IMR-90 (cell line): ENCODE measurements at regions of chr3 and their contacts with region 1.

Region 1: DNA sequence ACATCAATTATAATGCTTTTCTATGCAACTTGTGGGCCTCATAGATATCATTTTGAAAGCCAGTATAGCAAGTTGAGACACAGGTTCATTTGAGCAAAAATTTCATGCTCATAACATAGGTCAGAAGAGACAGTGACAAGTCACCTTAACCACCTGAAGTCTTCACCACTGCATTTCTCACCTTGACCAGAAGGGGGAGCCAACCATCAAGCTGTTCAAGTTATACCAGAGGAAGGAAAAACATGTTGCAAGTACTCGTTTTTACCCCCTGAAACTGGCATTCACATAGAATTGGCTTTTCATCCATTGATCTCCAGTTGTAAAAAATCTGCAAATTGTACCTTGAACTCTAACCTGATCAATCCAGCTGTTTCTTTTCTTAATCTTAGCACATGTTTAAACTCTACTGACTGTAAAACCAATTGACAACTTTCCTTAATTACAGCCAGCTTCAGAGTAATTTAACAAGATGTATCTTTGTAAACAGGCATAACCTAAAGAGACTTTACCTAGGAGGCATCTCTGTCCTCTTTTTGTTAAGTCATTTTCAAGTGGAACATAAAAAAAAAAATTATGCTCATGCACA is 1.4 kb downstream of the LMOD3 start:
- DNase-seq: peak; percentile 76
- ATAC-seq: peak; percentile 75
- H3K4me3 ChIP-seq: no peak overlapping the region
- H3K27ac ChIP-seq: no peak overlapping the region
- H3K4me1 ChIP-seq: no peaks in the 10 kb centered on the region
- H3K27me3 ChIP-seq: peaks cover 7% of the 10 kb centered on the region
- CTCF ChIP-seq: peak; percentile 78
- POLR2A ChIP-seq: no peak
- RAD21 ChIP-seq: peak; percentile 67

Region 2: DNA sequence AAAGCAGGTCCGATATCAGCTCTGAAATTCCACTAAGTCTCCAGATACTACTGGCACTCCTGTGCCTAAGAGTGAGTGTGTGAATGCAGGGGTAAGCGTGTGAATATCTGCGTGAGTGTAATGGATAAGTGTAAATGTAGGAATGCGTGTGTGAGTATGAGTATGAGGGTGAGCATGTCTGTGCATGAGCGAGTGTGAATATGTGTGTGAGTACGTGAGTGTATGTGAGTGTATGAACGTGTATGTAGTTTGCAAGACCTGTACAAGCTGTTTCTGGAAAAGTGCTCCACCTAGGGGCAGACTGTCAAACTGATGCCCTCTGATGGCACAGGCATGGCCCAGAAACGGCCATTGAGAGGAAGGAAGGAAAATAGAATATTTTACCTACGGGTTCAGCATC is 289.3 kb after region 1 on chr3:
- CTCF ChIA-PET with region 1: interaction called, 3 read pairs
- POLR2A ChIA-PET with region 1: no interaction called
- dilution Hi-C with region 1: no loop called
- in situ Hi-C with region 1: no loop called
- intact Hi-C with region 1: loop called (anchors 2 kb)
- DNase-seq: peak; percentile 53
- ATAC-seq: peak; percentile 93
- H3K4me3 ChIP-seq: no peak overlapping the region
- H3K27ac ChIP-seq: no peak overlapping the region
- H3K4me1 ChIP-seq: no peaks in the 10 kb centered on the region
- H3K27me3 ChIP-seq: peaks cover 1% of the 10 kb centered on the region
- CTCF ChIP-seq: peak; percentile 67
- POLR2A ChIP-seq: no peak
- RAD21 ChIP-seq: peak; percentile 40

Region 3: GRCh38 chr3:69671082-69671952 is 550.3 kb after region 1 on chr3:
- CTCF ChIA-PET with region 1: interaction called, 3 read pairs
- POLR2A ChIA-PET with region 1: no interaction called
- dilution Hi-C with region 1: no loop called
- in situ Hi-C with region 1: no loop called
- intact Hi-C with region 1: loop called (anchors 10 kb)
- DNase-seq: peak; percentile 42
- ATAC-seq: peak; percentile 75
- H3K4me3 ChIP-seq: no peak overlapping the region
- H3K27ac ChIP-seq: no peak overlapping the region
- H3K4me1 ChIP-seq: no peaks in the 10 kb centered on the region
- H3K27me3 ChIP-seq: peaks cover 2% of the 10 kb centered on the region; the same call in 1 of the 2 replicates
- CTCF ChIP-seq: peak; percentile 77
- POLR2A ChIP-seq: no peak
- RAD21 ChIP-seq: peak; percentile 77